K562 (cell line): ENCODE measurements at regions of chr5 and their contacts with region 1.

Region 1: DNA sequence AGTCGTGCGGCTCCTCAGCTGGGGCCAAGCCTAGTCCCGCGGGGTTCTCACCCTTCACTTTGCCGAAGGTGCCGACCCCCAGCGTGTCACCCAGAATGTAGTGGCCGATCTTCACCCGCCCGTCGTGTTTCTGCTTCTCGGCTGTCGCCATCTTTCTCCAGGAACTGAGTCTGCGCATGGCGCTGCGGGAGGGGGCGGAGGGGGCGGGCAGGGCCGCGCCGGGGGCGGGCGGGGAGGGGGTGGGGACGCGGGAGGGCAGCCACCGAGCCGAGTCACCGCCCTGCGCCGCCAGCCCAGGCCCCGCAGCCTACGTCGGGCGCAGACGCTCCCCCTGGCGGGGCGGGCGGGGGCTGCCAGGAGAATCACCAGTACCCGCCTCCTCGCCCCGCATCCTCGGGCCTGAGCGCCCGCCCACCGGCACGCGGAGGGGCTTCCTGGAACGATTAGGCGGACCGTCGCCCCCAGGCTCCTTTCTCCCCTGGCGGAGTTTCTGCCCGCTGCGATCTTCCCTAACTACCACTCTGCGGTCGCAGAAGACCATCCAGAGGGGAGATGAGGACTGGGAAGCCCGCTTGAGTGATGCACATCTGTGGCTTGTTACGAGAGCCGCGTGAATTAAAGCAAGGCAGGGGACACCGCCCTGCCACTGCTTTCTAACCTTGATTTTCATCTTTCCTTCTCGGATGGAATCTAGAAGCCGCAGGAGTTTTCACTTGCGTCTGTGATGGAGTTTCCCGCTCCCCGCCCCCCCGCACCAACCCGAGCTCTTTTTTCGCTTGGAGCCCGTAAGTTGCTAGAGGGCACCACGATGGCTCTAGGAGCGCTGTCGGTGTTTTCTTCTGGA is at the start of gene PRKAA1:
- DNase-seq: peak; percentile 94 to 96 (median 95)
- ATAC-seq: peak; percentile 85
- H3K4me3 ChIP-seq: peak within 1 kb of the TSS; percentile 94
- H3K27ac ChIP-seq: peak within 1 kb of the TSS; percentile 92
- H3K4me1 ChIP-seq: peaks cover 26 to 35% of the 10 kb centered on the region in 2 experiments
- H3K27me3 ChIP-seq: no peaks in the 10 kb centered on the region
- CTCF ChIP-seq: peak; percentile 53 to 85 (median 72); a peak in 5 of 6 replicates
- EP300 ChIP-seq: no peak; the same call in 1 of the 2 replicates
- POLR2A ChIP-seq: peak; percentile 93
- RAD21 ChIP-seq: peak in 1 of 2 experiments; percentile 48; a peak in 2 of 4 replicates
- polyA plus RNA-seq, gene PRKAA1: 24.5 to 37.3 TPM

Region 2: GRCh38 chr5:40652441-40653220 is 145.6 kb before region 1 on chr5:
- CTCF ChIA-PET with region 1: no interaction called
- POLR2A ChIA-PET with region 1: no interaction called
- in situ Hi-C with region 1: no loop called
- intact Hi-C with region 1: no loop called
- DNase-seq: no peak
- ATAC-seq: no peak
- H3K4me3 ChIP-seq: no peak overlapping the region
- H3K27ac ChIP-seq: no peak overlapping the region
- H3K4me1 ChIP-seq: no peaks in the 10 kb centered on the region
- H3K27me3 ChIP-seq: no peaks in the 10 kb centered on the region
- CTCF ChIP-seq: no peak
- EP300 ChIP-seq: no peak
- POLR2A ChIP-seq: no peak
- RAD21 ChIP-seq: no peak

Region 3: DNA sequence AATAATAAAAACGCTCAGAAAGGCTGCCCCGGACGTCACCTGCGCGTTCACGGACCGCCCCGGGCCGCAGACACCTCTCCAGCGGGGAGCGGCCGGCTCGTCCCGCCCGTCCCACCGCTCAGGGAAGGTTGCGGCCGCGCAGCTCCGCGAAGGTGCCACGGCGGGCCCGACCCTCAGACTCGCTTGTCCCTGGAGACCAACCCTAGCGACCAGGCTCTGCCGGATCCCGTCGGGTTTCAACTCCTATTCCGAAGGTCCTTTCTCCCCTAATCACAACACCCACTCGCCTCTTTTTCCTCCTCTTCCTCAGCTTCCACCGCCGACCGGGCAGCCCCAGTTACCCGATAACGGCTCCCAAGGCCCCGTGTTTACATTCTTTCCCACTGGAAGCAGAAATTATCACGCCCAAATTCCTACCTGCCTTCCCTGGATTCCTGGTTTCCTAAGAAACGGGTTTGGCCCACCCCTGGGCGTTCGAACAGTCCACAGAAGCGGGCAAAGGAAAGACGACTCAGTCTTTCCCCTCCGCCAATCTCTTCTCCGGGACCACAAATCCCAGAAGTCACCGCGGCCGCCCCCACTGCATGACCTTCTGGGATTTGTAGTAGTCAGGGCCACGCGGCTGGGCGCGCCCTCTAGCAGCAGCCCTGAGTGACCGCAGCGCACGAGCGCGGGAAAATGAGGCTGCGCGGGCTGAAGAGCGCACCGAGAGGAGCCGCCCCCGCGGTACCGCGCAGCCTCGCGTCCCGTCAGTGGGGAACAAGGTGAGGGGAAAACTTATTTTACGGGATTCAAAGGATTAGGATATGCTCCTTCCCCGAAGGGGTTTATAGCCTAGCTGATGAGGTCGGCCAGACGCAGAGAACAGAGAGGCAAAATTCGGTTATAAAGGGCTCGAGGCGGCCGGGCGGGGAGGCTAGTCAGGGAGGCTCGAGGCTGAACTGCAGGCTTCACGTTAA is 42.5 kb before region 1 on chr5 and contains the start of gene TTC33:
- CTCF ChIA-PET with region 1: no interaction called
- POLR2A ChIA-PET with region 1: interaction called, 5 read pairs
- in situ Hi-C with region 1: no loop called
- intact Hi-C with region 1: loop called (anchors 1 kb)
- DNase-seq: peak; percentile 92 to 99 (median 96)
- ATAC-seq: peak; percentile 94
- H3K4me3 ChIP-seq: peak within 1 kb of the TSS; percentile 68
- H3K27ac ChIP-seq: peak within 1 kb of the TSS; percentile 69
- H3K4me1 ChIP-seq: peaks cover 9 to 12% of the 10 kb centered on the region in 2 experiments; a peak in 3 of 5 replicates
- H3K27me3 ChIP-seq: no peaks in the 10 kb centered on the region
- CTCF ChIP-seq: peak; percentile 91 to 95 (median 92)
- EP300 ChIP-seq: peak; percentile 30; the same call in 1 of the 2 replicates
- POLR2A ChIP-seq: peak; percentile 72
- RAD21 ChIP-seq: peak; percentile 45 to 55
- polyA plus RNA-seq, gene TTC33: 21.1 to 24.9 TPM